GM12878 (cell line): ENCODE measurements at regions of chr7 and their contacts with region 1.

Region 1: GRCh38 chr7:65307651-65308299 is 65.9 kb upstream of the ZNF92 start:
- DNase-seq: peak; percentile 20
- ATAC-seq: peak; percentile 97
- H3K4me3 ChIP-seq: no peak overlapping the region
- H3K27ac ChIP-seq: no peak overlapping the region
- H3K4me1 ChIP-seq: no peaks in the 10 kb centered on the region
- H3K27me3 ChIP-seq: no peaks in the 10 kb centered on the region
- CTCF ChIP-seq: peak; percentile 77 to 81 (median 79)
- EP300 ChIP-seq: no peak
- POLR2A ChIP-seq: no peak
- RAD21 ChIP-seq: peak; percentile 88

Region 2: GRCh38 chr7:64839811-64840309 is 467.9 kb before region 1 on chr7:
- CTCF ChIA-PET with region 1: no interaction called
- POLR2A ChIA-PET with region 1: no interaction called
- RAD21 ChIA-PET with region 1: no interaction called
- SMC1A ChIA-PET with region 1: no interaction called
- in situ Hi-C with region 1: no loop called
- intact Hi-C with region 1: no loop called
- DNase-seq: no peak
- ATAC-seq: no peak
- H3K4me3 ChIP-seq: no peak overlapping the region
- H3K27ac ChIP-seq: no peak overlapping the region
- H3K4me1 ChIP-seq: no peaks in the 10 kb centered on the region
- H3K27me3 ChIP-seq: no peaks in the 10 kb centered on the region
- CTCF ChIP-seq: no peak
- EP300 ChIP-seq: no peak
- POLR2A ChIP-seq: no peak
- RAD21 ChIP-seq: no peak

Region 3: DNA sequence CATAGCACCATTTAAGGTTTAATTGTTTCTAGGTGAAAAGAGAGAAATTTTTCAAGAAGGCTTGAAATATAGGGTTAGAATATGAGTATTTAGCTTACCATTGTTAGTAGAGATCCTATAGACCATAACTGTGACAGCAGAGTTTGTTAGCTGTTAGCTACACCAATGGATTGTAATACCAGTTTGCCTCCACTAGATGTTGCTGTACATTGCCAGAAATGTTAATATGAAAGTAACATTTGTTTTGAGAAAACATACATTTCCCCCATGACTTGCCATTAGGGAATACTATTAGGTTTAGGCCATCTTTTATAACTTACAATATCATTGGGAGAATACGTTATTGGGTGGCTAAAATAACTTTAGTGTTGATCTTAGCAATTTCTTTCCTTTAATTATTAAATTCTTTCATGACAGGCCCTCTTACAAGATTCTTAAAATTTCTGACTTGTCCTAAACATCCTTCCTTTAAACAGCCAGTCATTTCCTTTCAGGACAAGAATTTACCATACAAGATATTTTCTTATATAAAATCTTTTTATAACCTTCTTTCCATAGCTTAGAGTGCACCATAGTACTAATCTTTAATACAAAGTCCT is 356.4 kb before region 1 on chr7:
- CTCF ChIA-PET with region 1: interaction called, 67 read pairs
- POLR2A ChIA-PET with region 1: no interaction called
- RAD21 ChIA-PET with region 1: interaction called, 38 read pairs
- SMC1A ChIA-PET with region 1: interaction called, 46 read pairs
- in situ Hi-C with region 1: no loop called
- intact Hi-C with region 1: loop called (anchors 1 kb)
- DNase-seq: peak; percentile 16
- ATAC-seq: peak; percentile 79
- H3K4me3 ChIP-seq: no peak overlapping the region
- H3K27ac ChIP-seq: no peak overlapping the region
- H3K4me1 ChIP-seq: no peaks in the 10 kb centered on the region
- H3K27me3 ChIP-seq: no peaks in the 10 kb centered on the region; a peak in 1 of 4 replicates
- CTCF ChIP-seq: peak; percentile 69 to 82 (median 69); a peak in 5 of 6 replicates
- EP300 ChIP-seq: no peak
- POLR2A ChIP-seq: no peak
- RAD21 ChIP-seq: peak; percentile 83

Region 4: GRCh38 chr7:65216459-65216858 is 91.3 kb before region 1 on chr7:
- CTCF ChIA-PET with region 1: interaction called, 67 read pairs
- POLR2A ChIA-PET with region 1: no interaction called
- RAD21 ChIA-PET with region 1: interaction called, 33 read pairs
- SMC1A ChIA-PET with region 1: interaction called, 24 read pairs
- in situ Hi-C with region 1: loop called (anchors 5 kb)
- intact Hi-C with region 1: loop called (anchors 1 kb)
- DNase-seq: no peak
- ATAC-seq: peak; percentile 91
- H3K4me3 ChIP-seq: no peak overlapping the region
- H3K27ac ChIP-seq: no peak overlapping the region
- H3K4me1 ChIP-seq: no peaks in the 10 kb centered on the region
- H3K27me3 ChIP-seq: no peaks in the 10 kb centered on the region
- CTCF ChIP-seq: peak; percentile 58 to 76 (median 61); a peak in 5 of 6 replicates
- EP300 ChIP-seq: no peak
- POLR2A ChIP-seq: no peak
- RAD21 ChIP-seq: peak; percentile 74

Region 5: DNA sequence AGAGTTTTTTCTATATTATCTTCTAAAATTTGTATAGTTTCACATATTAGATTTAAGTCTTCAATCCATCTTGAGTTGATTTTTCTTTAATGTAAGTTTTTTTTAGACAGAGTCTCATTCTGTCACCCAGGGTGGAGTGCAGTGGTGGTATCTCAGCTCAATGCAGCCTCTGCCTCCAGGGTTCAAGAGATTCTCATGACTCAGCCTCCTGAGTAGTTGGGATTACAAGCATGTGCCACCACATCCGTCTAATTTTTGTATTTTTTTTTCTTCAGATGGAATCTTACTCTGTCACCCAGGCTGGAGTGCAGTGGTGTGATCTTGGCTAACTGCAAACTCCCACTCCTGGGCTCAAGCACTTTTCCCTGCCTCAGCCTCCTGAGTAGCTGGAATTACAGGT is 77.5 kb before region 1 on chr7:
- CTCF ChIA-PET with region 1: interaction called, 4 read pairs
- POLR2A ChIA-PET with region 1: no interaction called
- RAD21 ChIA-PET with region 1: interaction called, 6 read pairs
- SMC1A ChIA-PET with region 1: interaction called, 10 read pairs
- in situ Hi-C with region 1: no loop called
- intact Hi-C with region 1: no loop called
- DNase-seq: no peak
- ATAC-seq: no peak
- H3K4me3 ChIP-seq: no peak overlapping the region
- H3K27ac ChIP-seq: no peak overlapping the region
- H3K4me1 ChIP-seq: no peaks in the 10 kb centered on the region
- H3K27me3 ChIP-seq: no peaks in the 10 kb centered on the region
- CTCF ChIP-seq: no peak
- EP300 ChIP-seq: no peak
- POLR2A ChIP-seq: no peak
- RAD21 ChIP-seq: no peak

Region 6: GRCh38 chr7:65251851-65252620 is 55.7 kb before region 1 on chr7:
- CTCF ChIA-PET with region 1: interaction called, 10 read pairs
- POLR2A ChIA-PET with region 1: no interaction called
- RAD21 ChIA-PET with region 1: interaction called, 3 read pairs
- SMC1A ChIA-PET with region 1: interaction called, 4 read pairs
- in situ Hi-C with region 1: no loop called
- intact Hi-C with region 1: no loop called
- DNase-seq: peak; percentile 27
- ATAC-seq: peak; percentile 95
- H3K4me3 ChIP-seq: peak overlapping the region; percentile 56
- H3K27ac ChIP-seq: no peak overlapping the region; the same call in 1 of the 2 replicates
- H3K4me1 ChIP-seq: no peaks in the 10 kb centered on the region
- H3K27me3 ChIP-seq: no peaks in the 10 kb centered on the region
- CTCF ChIP-seq: no peak
- EP300 ChIP-seq: no peak
- POLR2A ChIP-seq: peak; percentile 54; the same call in 1 of the 2 replicates
- RAD21 ChIP-seq: no peak

Region 7: GRCh38 chr7:65269150-65269856 is 38.5 kb before region 1 on chr7:
- CTCF ChIA-PET with region 1: interaction called, 9 read pairs
- POLR2A ChIA-PET with region 1: interaction called, 4 read pairs
- RAD21 ChIA-PET with region 1: interaction called, 13 read pairs
- SMC1A ChIA-PET with region 1: interaction called, 3 read pairs
- in situ Hi-C with region 1: no loop called
- intact Hi-C with region 1: no loop called
- DNase-seq: peak; percentile 73
- ATAC-seq: peak; percentile 99
- H3K4me3 ChIP-seq: peak overlapping the region; percentile 75
- H3K27ac ChIP-seq: peak overlapping the region; percentile 61; the same call in 1 of the 2 replicates
- H3K4me1 ChIP-seq: no peaks in the 10 kb centered on the region
- H3K27me3 ChIP-seq: no peaks in the 10 kb centered on the region
- CTCF ChIP-seq: no peak
- EP300 ChIP-seq: no peak
- POLR2A ChIP-seq: peak; percentile 74
- RAD21 ChIP-seq: no peak

Region 8: GRCh38 chr7:65287023-65287422 is 20.8 kb before region 1 on chr7:
- CTCF ChIA-PET with region 1: interaction called, 14 read pairs
- POLR2A ChIA-PET with region 1: no interaction called
- RAD21 ChIA-PET with region 1: interaction called, 4 read pairs
- SMC1A ChIA-PET with region 1: interaction called, 3 read pairs
- in situ Hi-C with region 1: no loop called
- intact Hi-C with region 1: no loop called
- DNase-seq: no peak
- ATAC-seq: no peak
- H3K4me3 ChIP-seq: no peak overlapping the region
- H3K27ac ChIP-seq: no peak overlapping the region
- H3K4me1 ChIP-seq: no peaks in the 10 kb centered on the region
- H3K27me3 ChIP-seq: no peaks in the 10 kb centered on the region
- CTCF ChIP-seq: no peak
- EP300 ChIP-seq: no peak
- POLR2A ChIP-seq: no peak
- RAD21 ChIP-seq: no peak

Region 9: GRCh38 chr7:65429642-65430343 is 122.0 kb after region 1 on chr7:
- CTCF ChIA-PET with region 1: no interaction called
- POLR2A ChIA-PET with region 1: no interaction called
- RAD21 ChIA-PET with region 1: no interaction called
- SMC1A ChIA-PET with region 1: no interaction called
- in situ Hi-C with region 1: no loop called
- intact Hi-C with region 1: no loop called
- DNase-seq: no peak
- ATAC-seq: no peak
- H3K4me3 ChIP-seq: no peak overlapping the region
- H3K27ac ChIP-seq: no peak overlapping the region
- H3K4me1 ChIP-seq: no peaks in the 10 kb centered on the region
- H3K27me3 ChIP-seq: no peaks in the 10 kb centered on the region
- CTCF ChIP-seq: no peak
- EP300 ChIP-seq: no peak
- POLR2A ChIP-seq: no peak
- RAD21 ChIP-seq: no peak